CD8-positive, alpha-beta T cell (primary cell): ENCODE measurements at regions of chr18 and their contacts with region 1.

Region 1: GRCh38 chr18:79702906-79703305 is 23.3 kb downstream of the CTDP1 start:
- DNase-seq: no peak
- ATAC-seq: no peak
- H3K4me3 ChIP-seq: no peak overlapping the region
- H3K4me3 Mint-ChIP-seq: no peak overlapping the region
- H3K27ac ChIP-seq: no peak overlapping the region
- H3K27ac Mint-ChIP-seq: no peak overlapping the region
- H3K4me1 ChIP-seq: no peaks in the 10 kb centered on the region
- H3K4me1 Mint-ChIP-seq: peaks cover 6% of the 10 kb centered on the region
- H3K27me3 ChIP-seq: no peaks in the 10 kb centered on the region
- H3K27me3 Mint-ChIP-seq: no peaks in the 10 kb centered on the region
- CTCF ChIP-seq: no peak

Region 2: GRCh38 chr18:79720355-79720733 is 17.4 kb after region 1 on chr18:
- CTCF ChIA-PET with region 1: no interaction called
- POLR2A ChIA-PET with region 1: no interaction called
- intact Hi-C with region 1: loop called in 1 of 2 experiments (anchors 2 kb)
- DNase-seq: peak in 2 of 9 experiments; percentile 30 to 34
- ATAC-seq: no peak
- H3K4me3 ChIP-seq: no peak overlapping the region
- H3K4me3 Mint-ChIP-seq: no peak overlapping the region
- H3K27ac ChIP-seq: no peak overlapping the region
- H3K27ac Mint-ChIP-seq: peak overlapping the region; percentile 82
- H3K4me1 ChIP-seq: no peaks in the 10 kb centered on the region
- H3K4me1 Mint-ChIP-seq: peaks cover 20% of the 10 kb centered on the region
- H3K27me3 ChIP-seq: no peaks in the 10 kb centered on the region
- H3K27me3 Mint-ChIP-seq: no peaks in the 10 kb centered on the region
- CTCF ChIP-seq: no peak